Right ventricle myocardium inferior (tissue), 1 donor: ENCODE measurements at regions of chr20 and their contacts with region 1.

Region 1: GRCh38 chr20:49909499-49910339 is 5.6 kb downstream of the SPATA2 start:
- DNase-seq: no peak
- ATAC-seq: peak; percentile 74

Region 2: GRCh38 chr20:49893242-49894072 is 16.3 kb before region 1 on chr20:
- intact Hi-C with region 1: loop called (anchors 2 kb)
- DNase-seq: peak; percentile 33
- ATAC-seq: peak; percentile 33